CD4-positive, alpha-beta memory T cell (primary cell): ENCODE measurements at regions of chr3 and their contacts with region 1.

Region 1: GRCh38 chr3:46998121-46998851 is 18.8 kb downstream of the NBEAL2 start:
- DNase-seq: peak; percentile 65 to 73 (median 69)
- H3K4me3 ChIP-seq: no peak overlapping the region
- H3K4me3 Mint-ChIP-seq: no peak overlapping the region
- H3K27ac ChIP-seq: no peak overlapping the region
- H3K27ac Mint-ChIP-seq: peak overlapping the region; percentile 65 to 90 (median 85)
- H3K4me1 ChIP-seq: peaks cover 23% of the 10 kb centered on the region
- H3K4me1 Mint-ChIP-seq: peaks cover 11 to 29% (median 19%) of the 10 kb centered on the region in 4 donors
- H3K27me3 ChIP-seq: no peaks in the 10 kb centered on the region
- H3K27me3 Mint-ChIP-seq: no peaks in the 10 kb centered on the region

Region 2: GRCh38 chr3:46163318-46164041 is 834.8 kb before region 1 on chr3:
- CTCF ChIA-PET with region 1: no interaction called
- POLR2A ChIA-PET with region 1: no interaction called
- intact Hi-C with region 1: no loop called
- DNase-seq: no peak
- H3K4me3 ChIP-seq: no peak overlapping the region
- H3K4me3 Mint-ChIP-seq: no peak overlapping the region
- H3K27ac ChIP-seq: no peak overlapping the region
- H3K27ac Mint-ChIP-seq: no peak overlapping the region
- H3K4me1 ChIP-seq: no peaks in the 10 kb centered on the region
- H3K4me1 Mint-ChIP-seq: no peaks in the 10 kb centered on the region
- H3K27me3 ChIP-seq: no peaks in the 10 kb centered on the region
- H3K27me3 Mint-ChIP-seq: no peaks in the 10 kb centered on the region

Region 3: GRCh38 chr3:46778101-46778500 is 220.2 kb before region 1 on chr3:
- CTCF ChIA-PET with region 1: no interaction called
- POLR2A ChIA-PET with region 1: no interaction called
- intact Hi-C with region 1: no loop called
- DNase-seq: no peak
- H3K4me3 ChIP-seq: no peak overlapping the region
- H3K4me3 Mint-ChIP-seq: no peak overlapping the region
- H3K27ac ChIP-seq: no peak overlapping the region
- H3K27ac Mint-ChIP-seq: no peak overlapping the region
- H3K4me1 ChIP-seq: no peaks in the 10 kb centered on the region
- H3K4me1 Mint-ChIP-seq: no peaks in the 10 kb centered on the region
- H3K27me3 ChIP-seq: no peaks in the 10 kb centered on the region
- H3K27me3 Mint-ChIP-seq: peaks cover 9% of the 10 kb centered on the region in 2 donors

Region 4: GRCh38 chr3:46909535-46910442 is 88.5 kb before region 1 on chr3:
- CTCF ChIA-PET with region 1: interaction called, 10 read pairs
- POLR2A ChIA-PET with region 1: interaction called, 3 read pairs
- intact Hi-C with region 1: no loop called
- DNase-seq: peak; percentile 64 to 82 (median 70)
- H3K4me3 ChIP-seq: no peak overlapping the region
- H3K4me3 Mint-ChIP-seq: peak overlapping the region in 1 of 8 donors; percentile 23
- H3K27ac ChIP-seq: no peak overlapping the region
- H3K27ac Mint-ChIP-seq: peak overlapping the region in 2 of 7 donors; percentile 4 to 30
- H3K4me1 ChIP-seq: peaks cover 27% of the 10 kb centered on the region
- H3K4me1 Mint-ChIP-seq: peaks cover 13 to 18% (median 17%) of the 10 kb centered on the region in 4 donors
- H3K27me3 ChIP-seq: no peaks in the 10 kb centered on the region
- H3K27me3 Mint-ChIP-seq: no peaks in the 10 kb centered on the region

Region 5: DNA sequence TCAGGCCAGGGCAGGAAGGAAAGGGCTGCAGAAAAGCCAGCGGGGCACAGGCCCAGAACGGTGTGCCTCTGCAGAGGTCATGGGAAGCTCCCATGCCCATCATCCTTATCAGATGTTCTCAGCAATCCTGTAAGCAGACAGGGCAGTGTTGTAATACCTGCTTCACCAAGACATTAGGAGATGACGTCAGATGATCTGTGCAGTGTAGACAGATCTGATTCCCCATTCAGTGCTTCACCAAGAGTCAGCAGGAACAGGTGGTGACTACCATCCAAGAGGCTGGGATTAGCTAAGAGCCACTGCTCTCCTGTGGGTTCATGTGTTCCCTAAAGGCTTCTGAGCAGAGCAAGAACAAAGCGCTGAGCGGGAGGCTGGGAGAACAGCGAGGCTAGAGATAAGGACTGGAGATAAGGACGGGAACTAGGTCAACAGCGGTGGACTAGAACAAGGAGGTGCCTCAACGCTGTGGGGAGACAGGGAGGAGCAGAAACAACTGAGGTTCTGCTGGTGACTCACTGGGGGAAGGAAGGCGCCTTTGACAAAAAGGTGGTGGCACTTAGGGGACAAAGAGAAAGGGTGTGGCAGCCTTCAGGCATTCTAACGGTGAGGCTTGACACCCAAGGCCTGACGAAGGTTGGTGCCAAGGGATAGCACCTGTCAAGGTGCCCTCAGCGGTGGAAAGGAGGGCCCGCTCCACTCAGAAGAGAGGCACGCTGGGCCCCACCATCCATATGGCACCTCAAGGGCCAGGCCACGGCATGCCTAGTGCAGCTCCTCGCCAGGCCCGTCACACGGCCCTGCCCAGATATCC is 50.1 kb before region 1 on chr3:
- CTCF ChIA-PET with region 1: interaction called, 12 read pairs
- POLR2A ChIA-PET with region 1: interaction called, 21 read pairs
- intact Hi-C with region 1: no loop called
- DNase-seq: peak; percentile 73 to 97 (median 83)
- H3K4me3 ChIP-seq: peak overlapping the region in 1 of 2 donors; percentile 13
- H3K4me3 Mint-ChIP-seq: peak overlapping the region; percentile 56 to 85 (median 78)
- H3K27ac ChIP-seq: peak overlapping the region; percentile 69
- H3K27ac Mint-ChIP-seq: peak overlapping the region; percentile 95 to 99 (median 97)
- H3K4me1 ChIP-seq: peaks cover 88% of the 10 kb centered on the region
- H3K4me1 Mint-ChIP-seq: peaks cover 70 to 94% (median 80%) of the 10 kb centered on the region in 4 donors
- H3K27me3 ChIP-seq: no peaks in the 10 kb centered on the region
- H3K27me3 Mint-ChIP-seq: no peaks in the 10 kb centered on the region

Region 6: DNA sequence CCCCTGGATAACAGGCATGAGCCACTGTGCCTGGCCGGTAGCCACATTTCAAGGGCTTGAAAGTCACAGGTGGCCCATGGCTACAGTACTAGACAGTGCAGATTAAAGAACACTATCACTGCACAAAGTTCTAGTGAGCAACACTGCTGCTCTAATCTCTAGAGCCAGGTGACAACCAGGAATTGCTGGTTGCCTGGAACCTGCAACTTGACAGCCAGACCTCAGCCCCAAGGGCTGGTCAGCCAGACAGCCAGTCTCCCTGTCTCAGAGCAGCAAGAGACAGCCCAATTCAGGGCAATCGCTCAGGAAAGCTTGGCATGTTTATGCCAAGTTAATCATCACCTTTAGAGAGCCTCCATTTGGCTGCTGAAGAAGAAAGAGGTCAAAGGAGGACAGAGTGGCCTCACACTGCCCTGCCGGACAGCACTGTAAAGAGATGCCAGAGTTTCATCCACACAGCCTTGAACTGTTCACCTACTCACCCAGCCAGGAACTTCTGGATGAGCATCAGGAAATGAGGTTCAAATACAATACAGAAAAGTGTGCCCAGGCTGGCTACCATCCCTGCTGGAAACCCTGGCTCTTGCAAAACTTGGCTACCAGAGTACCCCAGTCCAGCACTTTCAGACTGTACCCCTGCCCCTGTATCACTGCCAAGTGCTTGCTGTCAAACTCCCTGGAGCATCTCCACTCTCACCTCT is 27.7 kb before region 1 on chr3:
- CTCF ChIA-PET with region 1: interaction called, 16 read pairs
- POLR2A ChIA-PET with region 1: interaction called, 222 read pairs
- intact Hi-C with region 1: no loop called
- DNase-seq: no peak
- H3K4me3 ChIP-seq: no peak overlapping the region
- H3K4me3 Mint-ChIP-seq: peak overlapping the region in 5 of 8 donors; percentile 17 to 79 (median 51)
- H3K27ac ChIP-seq: no peak overlapping the region
- H3K27ac Mint-ChIP-seq: peak overlapping the region in 5 of 7 donors; percentile 29 to 89 (median 75)
- H3K4me1 ChIP-seq: peaks cover 96% of the 10 kb centered on the region
- H3K4me1 Mint-ChIP-seq: peaks cover 71 to 95% (median 81%) of the 10 kb centered on the region in 4 donors
- H3K27me3 ChIP-seq: no peaks in the 10 kb centered on the region
- H3K27me3 Mint-ChIP-seq: no peaks in the 10 kb centered on the region

Region 7: DNA sequence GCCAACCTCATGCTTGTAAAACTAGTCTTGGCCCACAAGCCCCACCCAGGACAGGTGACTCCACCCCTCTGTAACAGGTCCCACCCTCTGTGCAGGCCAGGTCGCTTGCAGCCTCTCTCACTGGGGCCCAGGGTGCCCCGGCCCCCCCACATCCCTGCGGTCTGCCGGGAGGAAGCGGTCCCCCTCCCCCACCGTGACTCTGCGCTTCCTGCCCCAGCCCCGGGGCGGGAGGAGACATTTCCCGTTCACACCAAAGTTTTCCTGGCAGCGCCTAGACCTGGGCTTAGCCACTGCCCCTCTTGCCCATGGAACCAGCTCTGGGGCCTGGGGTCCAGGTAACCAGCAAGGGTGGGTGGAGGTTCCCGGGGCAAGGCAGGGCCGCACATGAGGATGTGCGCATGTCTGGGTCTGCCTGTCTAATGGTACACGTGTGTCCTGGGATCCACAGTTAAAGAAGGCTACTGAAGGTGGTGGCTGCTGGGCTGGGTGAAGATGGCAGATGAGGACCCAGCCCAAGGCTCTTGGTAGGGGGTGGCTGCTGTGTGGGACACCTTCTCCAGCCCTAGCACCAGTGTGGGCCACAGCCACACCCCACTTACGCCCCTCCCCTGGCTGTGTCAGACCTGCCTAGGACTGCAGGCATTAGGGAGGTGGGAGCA is 10.4 kb before region 1 on chr3:
- CTCF ChIA-PET with region 1: interaction called, 16 read pairs
- POLR2A ChIA-PET with region 1: interaction called, 34 read pairs
- intact Hi-C with region 1: no loop called
- DNase-seq: peak; percentile 91 to 94 (median 94)
- H3K4me3 ChIP-seq: peak overlapping the region; percentile 57 to 66
- H3K4me3 Mint-ChIP-seq: peak overlapping the region; percentile 83 to 91 (median 86)
- H3K27ac ChIP-seq: peak overlapping the region; percentile 76
- H3K27ac Mint-ChIP-seq: peak overlapping the region; percentile 86 to 98 (median 96)
- H3K4me1 ChIP-seq: peaks cover 86% of the 10 kb centered on the region
- H3K4me1 Mint-ChIP-seq: peaks cover 53 to 90% (median 76%) of the 10 kb centered on the region in 4 donors
- H3K27me3 ChIP-seq: no peaks in the 10 kb centered on the region
- H3K27me3 Mint-ChIP-seq: no peaks in the 10 kb centered on the region